Naive thymus-derived CD4-positive, alpha-beta T cell (primary cell): ENCODE measurements at regions of chr7 and their contacts with region 1.

Region 1: GRCh38 chr7:130063036-130063435 is 7.3 kb upstream of the KLHDC10 start:
- DNase-seq: peak; percentile 31 to 70 (median 47)
- ATAC-seq: peak; percentile 80
- H3K4me3 ChIP-seq: no peak overlapping the region
- H3K4me3 Mint-ChIP-seq: no peak overlapping the region
- H3K27ac ChIP-seq: no peak overlapping the region
- H3K27ac Mint-ChIP-seq: no peak overlapping the region
- H3K4me1 ChIP-seq: no peaks in the 10 kb centered on the region
- H3K4me1 Mint-ChIP-seq: peaks cover 0 to 3% (median 0%) of the 10 kb centered on the region in 7 donors
- H3K27me3 ChIP-seq: no peaks in the 10 kb centered on the region
- H3K27me3 Mint-ChIP-seq: peaks cover 0 to 7% (median 4%) of the 10 kb centered on the region in 5 donors

Region 2: GRCh38 chr7:130758429-130759056 is 695.5 kb after region 1 on chr7:
- CTCF ChIA-PET with region 1: no interaction called
- POLR2A ChIA-PET with region 1: no interaction called
- intact Hi-C with region 1: loop called in 1 of 2 experiments (anchors 1 kb)
- DNase-seq: peak in 6 of 9 donors; percentile 27 to 53 (median 43)
- ATAC-seq: peak; percentile 66
- H3K4me3 ChIP-seq: no peak overlapping the region
- H3K4me3 Mint-ChIP-seq: no peak overlapping the region
- H3K27ac ChIP-seq: no peak overlapping the region
- H3K27ac Mint-ChIP-seq: no peak overlapping the region
- H3K4me1 ChIP-seq: no peaks in the 10 kb centered on the region
- H3K4me1 Mint-ChIP-seq: peaks cover 0 to 2% (median 0%) of the 10 kb centered on the region in 7 donors
- H3K27me3 ChIP-seq: no peaks in the 10 kb centered on the region
- H3K27me3 Mint-ChIP-seq: peaks cover 0 to 13% (median 4%) of the 10 kb centered on the region in 5 donors

Region 3: DNA sequence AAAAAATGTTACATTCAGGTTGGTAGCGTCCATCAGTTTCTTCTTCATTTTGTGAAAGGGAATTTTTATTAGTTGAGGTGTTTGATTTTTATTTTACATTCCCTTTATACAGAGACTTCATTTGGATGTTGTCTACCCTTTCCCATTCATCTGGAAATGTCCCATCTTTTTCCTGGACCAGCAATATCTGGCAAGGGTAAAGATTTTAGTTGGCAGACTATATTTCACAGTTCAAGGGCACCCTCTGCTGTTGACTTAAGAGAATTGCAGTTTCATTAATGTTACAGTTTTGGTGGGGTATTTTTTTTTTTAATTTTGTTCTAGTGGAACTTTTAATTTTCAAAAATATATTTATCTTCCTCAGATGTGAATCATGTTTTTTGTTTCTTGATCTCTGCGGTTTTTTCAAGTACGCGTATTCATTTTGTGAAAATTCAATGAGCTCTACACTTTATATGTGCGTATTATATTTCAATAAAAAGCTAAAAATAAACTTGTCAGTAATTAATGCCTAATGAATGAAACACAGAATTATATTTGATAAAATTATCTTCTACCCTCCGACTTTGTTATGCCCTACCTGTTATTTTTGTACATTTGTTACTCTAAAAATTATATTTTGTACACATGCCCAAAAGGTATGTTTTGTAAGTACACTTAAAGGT is 768.9 kb after region 1 on chr7:
- CTCF ChIA-PET with region 1: no interaction called
- POLR2A ChIA-PET with region 1: no interaction called
- intact Hi-C with region 1: loop called (anchors 1 to 2 kb)
- DNase-seq: peak in 5 of 9 donors; percentile 15 to 34 (median 25)
- ATAC-seq: peak; percentile 46
- H3K4me3 ChIP-seq: no peak overlapping the region
- H3K4me3 Mint-ChIP-seq: no peak overlapping the region
- H3K27ac ChIP-seq: no peak overlapping the region
- H3K27ac Mint-ChIP-seq: peak overlapping the region in 2 of 9 donors; percentile 16 to 42
- H3K4me1 ChIP-seq: no peaks in the 10 kb centered on the region
- H3K4me1 Mint-ChIP-seq: peaks cover 0 to 6% (median 0%) of the 10 kb centered on the region in 7 donors
- H3K27me3 ChIP-seq: no peaks in the 10 kb centered on the region
- H3K27me3 Mint-ChIP-seq: peaks cover 3 to 22% (median 10%) of the 10 kb centered on the region in 5 donors